K562 (cell line): ENCODE measurements at regions of chr9 and their contacts with region 1.

Region 1: DNA sequence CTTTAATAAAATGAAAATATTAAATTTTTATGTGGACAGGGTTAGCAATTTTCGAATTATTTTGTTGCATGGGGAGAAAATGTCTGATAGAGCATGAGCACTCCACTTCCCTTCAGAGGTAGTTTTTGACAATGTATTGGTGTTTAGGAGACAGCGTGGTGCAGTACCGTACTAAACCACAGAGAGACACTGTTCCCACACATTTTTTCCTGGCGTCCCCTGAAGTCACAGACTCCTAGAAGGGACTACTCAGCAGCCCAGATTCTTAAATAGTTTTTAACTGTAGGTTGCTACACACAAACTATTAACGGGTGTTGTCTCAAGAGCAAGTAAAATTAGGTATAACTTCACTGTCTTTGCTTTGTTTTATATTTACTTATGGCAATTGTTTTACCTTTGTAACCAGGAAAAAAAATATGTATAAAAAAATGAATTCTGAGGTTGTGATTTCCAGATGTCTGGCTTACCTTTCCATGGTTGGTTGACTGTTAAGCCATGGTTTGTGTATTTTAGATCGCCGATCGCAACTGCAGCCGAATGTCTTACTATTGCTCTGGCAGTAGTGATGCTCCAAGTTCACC is 171.2 kb downstream of the DOCK8 start:
- DNase-seq: peak; percentile 28 to 46 (median 34)
- ATAC-seq: peak; percentile 95
- H3K4me3 ChIP-seq: no peak overlapping the region
- H3K27ac ChIP-seq: no peak overlapping the region
- H3K4me1 ChIP-seq: no peaks in the 10 kb centered on the region
- H3K27me3 ChIP-seq: no peaks in the 10 kb centered on the region
- CTCF ChIP-seq: peak; percentile 58 to 70 (median 62)
- EP300 ChIP-seq: no peak
- POLR2A ChIP-seq: no peak
- RAD21 ChIP-seq: peak; percentile 30 to 45

Region 2: DNA sequence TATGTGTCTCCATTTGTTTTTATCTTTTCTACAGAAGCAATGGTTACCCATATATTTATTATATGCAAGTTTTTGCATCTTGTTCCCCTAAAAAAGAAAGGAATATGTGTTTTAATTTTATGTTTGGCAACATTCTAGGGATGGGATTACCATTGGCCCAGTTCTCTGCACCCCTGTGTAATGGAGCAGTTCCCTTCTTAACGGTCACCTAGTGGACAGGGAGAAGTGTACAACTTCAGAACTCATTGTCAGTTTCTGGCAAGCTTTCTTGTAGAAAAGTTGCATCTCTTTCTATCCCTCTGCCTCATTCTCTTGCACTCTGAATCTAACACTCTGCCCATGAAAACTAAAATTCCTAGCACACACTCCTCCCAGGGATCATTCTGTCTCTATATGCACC is 93.0 kb before region 1 on chr9:
- CTCF ChIA-PET with region 1: no interaction called
- POLR2A ChIA-PET with region 1: no interaction called
- in situ Hi-C with region 1: no loop called
- intact Hi-C with region 1: no loop called
- DNase-seq: no peak
- ATAC-seq: peak; percentile 69; the same call in 1 of the 3 replicates
- H3K4me3 ChIP-seq: no peak overlapping the region
- H3K27ac ChIP-seq: no peak overlapping the region
- H3K4me1 ChIP-seq: 0 out of 5 replicates have a peak, but pooled peaks cover 0 to 5% of the 10 kb centered on the region in 2 experiments
- H3K27me3 ChIP-seq: no peaks in the 10 kb centered on the region
- CTCF ChIP-seq: 0 out of 6 replicates have a peak, but pooled peaks of 1 of the 3 experiments have one; percentile 6
- EP300 ChIP-seq: no peak
- POLR2A ChIP-seq: no peak
- RAD21 ChIP-seq: no peak

Region 3: DNA sequence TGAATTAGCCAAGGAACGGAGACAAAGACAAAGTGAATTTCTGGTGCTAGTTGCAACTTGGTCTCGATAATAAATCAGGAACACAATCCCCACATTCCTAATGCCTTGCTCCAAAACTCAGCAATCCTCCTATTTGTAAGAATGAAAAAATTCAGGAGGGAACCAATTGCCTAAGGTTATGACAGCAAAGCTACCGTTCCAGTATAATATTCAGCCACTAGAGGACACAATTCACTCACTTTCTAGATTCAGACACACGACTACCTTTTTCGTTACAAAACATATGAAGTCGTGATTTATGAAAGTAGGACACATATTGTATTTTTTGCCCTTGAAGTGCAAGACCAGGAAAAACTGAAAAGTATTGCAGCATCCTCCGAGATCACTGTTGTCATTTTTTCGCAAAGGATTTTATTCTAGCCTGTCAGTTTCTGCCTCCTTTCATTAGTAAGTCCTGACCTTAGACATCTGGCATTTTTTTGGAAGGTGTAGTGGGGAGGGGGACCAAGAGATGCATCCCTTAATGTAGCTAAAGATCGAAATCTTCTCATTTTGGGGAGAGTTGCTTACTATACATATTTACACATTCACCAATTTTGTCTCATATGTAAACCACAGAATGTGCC is 38.1 kb before region 1 on chr9:
- CTCF ChIA-PET with region 1: no interaction called
- POLR2A ChIA-PET with region 1: no interaction called
- in situ Hi-C with region 1: no loop called
- intact Hi-C with region 1: no loop called
- DNase-seq: peak; percentile 7 to 26 (median 16)
- ATAC-seq: peak; percentile 78
- H3K4me3 ChIP-seq: no peak overlapping the region
- H3K27ac ChIP-seq: no peak overlapping the region
- H3K4me1 ChIP-seq: no peaks in the 10 kb centered on the region
- H3K27me3 ChIP-seq: no peaks in the 10 kb centered on the region
- CTCF ChIP-seq: peak; percentile 25 to 72 (median 46); a peak in 5 of 6 replicates
- EP300 ChIP-seq: no peak
- POLR2A ChIP-seq: no peak
- RAD21 ChIP-seq: peak; percentile 30 to 46; a peak in 2 of 4 replicates

Region 4: GRCh38 chr9:551986-552929 is 166.3 kb after region 1 on chr9:
- CTCF ChIA-PET with region 1: no interaction called
- POLR2A ChIA-PET with region 1: no interaction called
- in situ Hi-C with region 1: no loop called
- intact Hi-C with region 1: loop called (anchors 5 kb)
- DNase-seq: no peak
- ATAC-seq: no peak
- H3K4me3 ChIP-seq: no peak overlapping the region
- H3K27ac ChIP-seq: no peak overlapping the region
- H3K4me1 ChIP-seq: no peaks in the 10 kb centered on the region
- H3K27me3 ChIP-seq: peaks cover 0 to 9% of the 10 kb centered on the region in 2 experiments; a peak in 3 of 5 replicates
- CTCF ChIP-seq: no peak
- EP300 ChIP-seq: no peak
- POLR2A ChIP-seq: no peak
- RAD21 ChIP-seq: no peak

Region 5: GRCh38 chr9:763692-764524 is 378.0 kb after region 1 on chr9:
- CTCF ChIA-PET with region 1: no interaction called
- POLR2A ChIA-PET with region 1: no interaction called
- in situ Hi-C with region 1: no loop called
- intact Hi-C with region 1: loop called (anchors 5 kb)
- DNase-seq: peak; percentile 40 to 53 (median 48)
- ATAC-seq: peak; percentile 98
- H3K4me3 ChIP-seq: no peak overlapping the region
- H3K27ac ChIP-seq: no peak overlapping the region
- H3K4me1 ChIP-seq: no peaks in the 10 kb centered on the region
- H3K27me3 ChIP-seq: peaks cover 0 to 7% of the 10 kb centered on the region in 2 experiments; a peak in 1 of 5 replicates
- CTCF ChIP-seq: peak; percentile 61
- EP300 ChIP-seq: no peak
- POLR2A ChIP-seq: no peak
- RAD21 ChIP-seq: peak; percentile 26 to 59; a peak in 3 of 4 replicates